PC-9 (cell line): ENCODE measurements at regions of chr12 and their contacts with region 1.

Region 1: DNA sequence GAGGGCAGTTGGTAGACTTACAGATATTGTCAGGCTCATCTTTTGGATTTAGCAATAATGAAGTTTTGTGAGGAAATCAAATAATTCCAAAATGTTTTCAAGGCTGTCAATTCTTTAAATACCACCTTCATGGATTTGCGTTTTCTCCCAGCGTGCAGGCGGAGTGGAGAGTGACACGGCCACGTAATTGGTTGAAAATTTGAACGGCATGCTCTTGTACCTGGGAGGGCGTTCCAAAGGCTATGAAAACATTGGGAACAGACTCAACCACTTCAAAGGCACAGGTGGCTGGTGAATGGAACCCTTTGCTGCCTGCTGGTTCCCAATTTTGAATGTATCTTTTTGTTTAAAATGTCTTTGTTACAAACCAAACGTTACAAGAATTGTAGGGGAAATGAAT is 12.4 kb downstream of the SMIM41 start:
- DNase-seq: no peak
- H3K4me3 ChIP-seq: no peak overlapping the region
- H3K27ac ChIP-seq: no peak overlapping the region
- H3K4me1 ChIP-seq: no peaks in the 10 kb centered on the region
- H3K27me3 ChIP-seq: peaks cover 34% of the 10 kb centered on the region
- CTCF ChIP-seq: no peak

Region 2: GRCh38 chr12:52044261-52044983 is 47.4 kb before region 1 on chr12:
- CTCF ChIA-PET with region 1: interaction called, 10 read pairs
- POLR2A ChIA-PET with region 1: no interaction called
- intact Hi-C with region 1: no loop called
- DNase-seq: peak in 1 of 2 experiments; percentile 25
- H3K4me3 ChIP-seq: no peak overlapping the region
- H3K27ac ChIP-seq: no peak overlapping the region
- H3K4me1 ChIP-seq: peaks cover 14% of the 10 kb centered on the region
- H3K27me3 ChIP-seq: no peaks in the 10 kb centered on the region
- CTCF ChIP-seq: no peak

Region 3: GRCh38 chr12:52063981-52064649 is 27.8 kb before region 1 on chr12:
- CTCF ChIA-PET with region 1: no interaction called
- POLR2A ChIA-PET with region 1: no interaction called
- intact Hi-C with region 1: no loop called
- DNase-seq: peak in 1 of 2 experiments; percentile 52
- H3K4me3 ChIP-seq: no peak overlapping the region
- H3K27ac ChIP-seq: no peak overlapping the region
- H3K4me1 ChIP-seq: 0 out of 2 replicates have a peak, but pooled peaks cover 1% of the 10 kb centered on the region
- H3K27me3 ChIP-seq: peaks cover 6% of the 10 kb centered on the region; the same call in 1 of the 2 replicates
- CTCF ChIP-seq: no peak